PC-9 (cell line): ENCODE measurements at regions of chr12 and their contacts with region 1.

Region 1: DNA sequence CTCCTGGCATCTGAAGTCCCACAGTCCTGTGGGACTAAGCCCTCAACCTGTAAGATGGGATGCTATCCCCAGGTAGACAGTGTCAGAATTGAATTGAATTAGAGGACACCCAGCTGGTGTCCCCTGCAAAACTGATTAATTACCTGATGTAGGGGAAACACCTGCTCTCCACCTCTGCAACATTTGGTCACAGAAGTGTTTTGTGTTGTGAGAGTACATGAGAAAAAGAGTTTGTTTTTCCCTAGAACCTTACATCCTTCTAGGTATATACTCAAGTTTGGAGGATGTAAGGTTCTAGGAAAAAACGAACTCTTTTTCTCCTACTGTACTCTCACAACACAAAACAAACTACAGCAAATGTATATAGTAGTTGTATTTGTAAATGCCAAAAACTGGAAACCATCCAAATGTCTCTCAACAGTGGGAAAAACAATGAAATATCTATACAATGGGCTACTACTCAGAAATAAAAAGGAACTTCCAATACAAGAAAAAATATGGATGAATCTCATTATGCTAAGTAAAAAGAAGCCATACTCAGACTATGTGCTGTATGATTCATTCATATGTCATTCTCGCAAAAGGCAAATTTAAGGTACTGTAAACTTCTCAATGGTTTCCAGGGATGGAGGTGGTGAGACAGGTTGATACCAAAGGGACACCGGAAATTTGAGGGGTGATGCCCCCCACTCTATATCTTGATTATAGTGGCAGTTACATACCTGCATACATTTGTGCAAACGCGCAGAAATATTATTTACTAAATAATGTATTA is 160.7 kb downstream of the MED13L start:
- DNase-seq: no peak
- H3K4me3 ChIP-seq: no peak overlapping the region
- H3K27ac ChIP-seq: no peak overlapping the region
- H3K4me1 ChIP-seq: peaks cover 15% of the 10 kb centered on the region
- H3K27me3 ChIP-seq: no peaks in the 10 kb centered on the region
- CTCF ChIP-seq: no peak

Region 2: DNA sequence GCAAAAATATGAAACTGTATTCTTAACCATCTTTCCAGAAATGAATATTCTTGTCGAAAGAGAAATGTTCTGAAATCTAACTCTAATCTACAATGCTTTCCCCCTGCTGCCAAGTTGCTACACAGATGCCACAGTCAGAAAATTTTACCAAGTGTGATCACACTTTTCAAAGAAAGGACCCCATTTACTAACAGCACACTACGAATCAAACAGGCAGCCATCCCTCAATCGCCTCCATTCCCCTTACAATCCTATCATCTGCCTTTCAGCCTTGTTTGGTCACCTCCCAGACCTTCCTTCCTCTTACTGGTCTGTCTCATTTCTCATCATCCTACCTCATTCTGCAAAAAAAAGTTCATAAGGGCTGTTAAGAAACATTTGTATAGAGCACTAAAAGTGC is 29.4 kb before region 1 on chr12:
- CTCF ChIA-PET with region 1: no interaction called
- POLR2A ChIA-PET with region 1: interaction called, 14 read pairs
- intact Hi-C with region 1: no loop called
- DNase-seq: no peak
- H3K4me3 ChIP-seq: no peak overlapping the region
- H3K27ac ChIP-seq: no peak overlapping the region
- H3K4me1 ChIP-seq: no peaks in the 10 kb centered on the region
- H3K27me3 ChIP-seq: no peaks in the 10 kb centered on the region
- CTCF ChIP-seq: no peak

Region 3: GRCh38 chr12:116358893-116359761 is 242.3 kb after region 1 on chr12:
- CTCF ChIA-PET with region 1: no interaction called
- POLR2A ChIA-PET with region 1: no interaction called
- intact Hi-C with region 1: no loop called
- DNase-seq: peak; percentile 85 to 86
- H3K4me3 ChIP-seq: no peak overlapping the region
- H3K27ac ChIP-seq: peak overlapping the region; percentile 33; the same call in 1 of the 2 replicates
- H3K4me1 ChIP-seq: peaks cover 7% of the 10 kb centered on the region
- H3K27me3 ChIP-seq: no peaks in the 10 kb centered on the region
- CTCF ChIP-seq: no peak

Region 4: GRCh38 chr12:116492703-116493324 is 376.0 kb after region 1 on chr12:
- CTCF ChIA-PET with region 1: no interaction called
- POLR2A ChIA-PET with region 1: no interaction called
- intact Hi-C with region 1: no loop called
- DNase-seq: peak; percentile 28 to 80
- H3K4me3 ChIP-seq: no peak overlapping the region
- H3K27ac ChIP-seq: peak overlapping the region; percentile 95
- H3K4me1 ChIP-seq: peaks cover 63% of the 10 kb centered on the region
- H3K27me3 ChIP-seq: no peaks in the 10 kb centered on the region
- CTCF ChIP-seq: no peak